Activated CD4-positive, alpha-beta T cell treated with anti-CD3 and anti-CD28 coated beads, Interleukin-2, amount 10 ng/mL, durations not matched to agents 24 days and 14 days (primary cell): ENCODE measurements at regions of chr1 and their contacts with region 1.

Region 1: GRCh38 chr1:221741711-221742554 is at the start of gene DUSP10:
- DNase-seq: peak; percentile 100
- H3K4me3 Mint-ChIP-seq: no peak within 1 kb of the TSS
- H3K27ac Mint-ChIP-seq: no peak within 1 kb of the TSS
- H3K4me1 Mint-ChIP-seq: peaks cover 34% of the 10 kb centered on the region
- H3K27me3 Mint-ChIP-seq: no peaks in the 10 kb centered on the region
- total RNA-seq, gene DUSP10: 13.5 and 14.6 TPM in 2 replicates

Region 2: DNA sequence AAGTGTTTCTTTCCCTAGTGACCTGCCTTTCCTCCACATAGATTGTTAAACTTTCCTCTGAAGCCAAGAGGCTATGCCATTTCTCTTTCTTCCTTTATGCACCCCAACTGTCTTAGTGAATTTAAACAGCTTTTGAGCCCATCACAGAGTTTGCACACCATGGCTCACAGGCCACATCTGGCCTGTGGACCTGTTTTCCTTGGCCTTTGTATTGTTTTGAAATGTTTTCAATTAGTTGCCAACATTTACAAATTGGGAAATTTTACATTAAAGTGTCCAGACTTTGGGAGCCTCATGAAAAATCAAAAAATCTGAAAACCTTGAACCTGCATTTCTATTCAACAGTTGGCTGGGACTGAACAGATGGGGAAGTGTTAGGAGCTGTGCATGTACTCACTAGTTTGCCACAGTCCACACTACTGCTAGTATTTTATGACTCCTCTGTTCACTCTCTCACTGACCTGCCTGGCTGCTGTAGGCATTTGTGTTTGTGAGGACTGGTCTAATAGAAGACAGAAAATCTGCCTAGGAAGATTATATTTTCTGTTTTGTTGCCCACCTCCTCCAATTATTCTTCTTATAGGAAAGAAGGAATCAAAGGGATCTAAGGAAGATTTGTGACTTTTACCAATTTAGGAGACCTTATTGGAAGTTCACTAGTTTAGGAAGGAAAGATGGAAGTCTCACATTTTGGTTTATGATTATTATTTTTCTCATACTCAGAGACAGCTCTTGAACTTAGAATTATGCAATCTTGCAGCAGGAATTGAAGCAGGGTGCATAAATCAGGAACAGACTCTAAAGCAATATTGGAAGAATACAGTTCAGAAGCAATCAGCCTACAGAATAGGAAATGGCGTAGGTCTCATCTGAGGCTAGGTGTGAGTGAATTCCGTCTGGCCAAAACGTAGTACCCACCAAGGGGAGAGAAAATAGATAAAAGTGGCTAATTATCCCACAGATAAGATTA is 728.0 kb before region 1 on chr1:
- intact Hi-C with region 1: no loop called
- DNase-seq: no peak
- H3K4me3 Mint-ChIP-seq: no peak overlapping the region
- H3K27ac Mint-ChIP-seq: no peak overlapping the region
- H3K4me1 Mint-ChIP-seq: no peaks in the 10 kb centered on the region
- H3K27me3 Mint-ChIP-seq: no peaks in the 10 kb centered on the region

Region 3: DNA sequence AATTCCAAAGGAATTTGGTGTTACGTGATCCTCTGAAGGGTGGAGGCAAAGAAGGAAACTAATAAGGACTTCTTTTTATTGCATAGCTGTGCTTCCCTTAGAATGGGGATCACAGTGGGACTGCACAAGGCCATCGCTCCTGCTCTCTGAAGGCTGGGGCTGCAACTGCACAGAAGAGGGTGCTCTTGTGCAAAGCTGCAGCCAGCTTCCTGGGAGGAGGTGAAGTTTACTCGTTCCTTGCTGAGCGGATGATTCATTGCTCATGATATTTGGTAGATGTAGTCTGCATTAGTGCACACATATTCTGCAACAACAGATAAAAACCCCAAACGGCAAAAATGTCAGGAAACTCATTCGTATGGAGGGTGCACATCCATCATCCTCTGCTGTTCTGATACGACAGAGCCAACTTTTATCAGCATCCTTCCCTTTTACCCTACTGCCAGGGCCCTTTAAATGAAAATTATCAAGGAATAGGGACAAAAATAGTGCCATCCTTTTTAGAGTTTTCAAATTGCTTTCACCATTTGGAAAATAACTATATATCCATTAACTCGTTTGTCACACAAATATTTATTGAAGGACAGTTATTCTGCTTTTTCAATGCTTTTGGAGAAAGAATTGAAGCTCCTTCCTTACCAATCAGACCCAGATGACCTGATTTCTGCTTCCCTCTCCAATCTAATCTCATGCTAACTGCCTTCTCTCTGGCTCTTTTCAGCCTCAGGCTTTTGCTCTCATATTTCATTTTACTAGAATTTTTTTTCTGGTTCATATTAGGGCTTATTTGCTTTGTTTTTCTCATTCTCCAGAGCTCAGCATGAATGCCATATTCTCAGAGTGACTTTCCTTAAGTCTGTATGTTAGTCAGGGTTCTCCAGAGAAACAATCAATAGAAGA is 263.6 kb before region 1 on chr1:
- intact Hi-C with region 1: loop called (anchors 5 kb)
- DNase-seq: peak; percentile 82
- H3K4me3 Mint-ChIP-seq: no peak overlapping the region
- H3K27ac Mint-ChIP-seq: no peak overlapping the region
- H3K4me1 Mint-ChIP-seq: no peaks in the 10 kb centered on the region
- H3K27me3 Mint-ChIP-seq: peaks cover 21% of the 10 kb centered on the region

Region 4: GRCh38 chr1:221667504-221667903 is 74.4 kb before region 1 on chr1:
- intact Hi-C with region 1: no loop called
- DNase-seq: no peak
- H3K4me3 Mint-ChIP-seq: no peak overlapping the region
- H3K27ac Mint-ChIP-seq: no peak overlapping the region
- H3K4me1 Mint-ChIP-seq: peaks cover 4% of the 10 kb centered on the region
- H3K27me3 Mint-ChIP-seq: peaks cover 22% of the 10 kb centered on the region

Region 5: DNA sequence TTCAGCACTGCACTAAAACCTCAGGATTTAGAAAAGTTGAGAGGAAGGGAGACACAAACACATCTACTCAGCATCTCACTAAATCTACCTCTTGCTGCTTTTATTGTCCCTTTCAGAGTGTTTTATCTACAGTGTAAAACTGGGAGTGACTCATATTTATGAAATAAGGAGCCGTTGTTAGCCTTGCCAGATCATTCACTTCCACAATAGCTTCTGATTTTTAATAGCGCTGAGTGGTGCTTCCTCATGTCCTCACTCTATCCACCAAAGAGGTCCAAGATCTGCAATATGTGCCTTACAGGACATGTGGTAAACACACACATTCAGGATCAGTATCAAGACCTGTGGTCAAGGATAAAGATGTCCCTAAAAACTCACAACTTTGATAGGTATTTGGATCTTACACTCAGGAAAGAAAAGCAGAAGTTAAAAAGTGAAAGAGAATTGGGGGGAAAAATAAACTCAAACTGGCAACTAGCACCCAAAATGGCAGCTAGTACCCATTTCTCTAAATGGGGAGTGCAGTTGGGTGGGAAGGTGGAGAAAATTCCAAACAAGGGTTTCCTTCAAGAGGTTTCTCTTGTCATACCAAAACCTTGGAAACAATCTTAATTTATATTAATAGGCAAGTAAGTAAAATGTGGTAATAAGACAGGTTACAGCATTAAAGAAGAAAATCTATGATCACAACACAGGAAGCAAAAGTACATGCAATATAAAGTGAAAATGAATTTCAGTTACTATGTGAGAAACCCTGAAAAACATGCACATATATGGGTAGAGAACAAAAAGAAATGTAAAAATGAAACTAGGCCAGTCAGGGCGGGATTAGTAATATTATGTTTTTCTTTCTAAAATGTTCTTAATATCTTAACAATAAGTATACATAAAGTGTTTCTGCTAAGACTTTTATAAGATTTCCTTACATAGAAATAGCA is 15.9 kb before region 1 on chr1:
- intact Hi-C with region 1: loop called (anchors 1 kb)
- DNase-seq: no peak
- H3K4me3 Mint-ChIP-seq: peak overlapping the region; percentile 65
- H3K27ac Mint-ChIP-seq: peak overlapping the region; percentile 93
- H3K4me1 Mint-ChIP-seq: peaks cover 71% of the 10 kb centered on the region
- H3K27me3 Mint-ChIP-seq: no peaks in the 10 kb centered on the region

Region 6: DNA sequence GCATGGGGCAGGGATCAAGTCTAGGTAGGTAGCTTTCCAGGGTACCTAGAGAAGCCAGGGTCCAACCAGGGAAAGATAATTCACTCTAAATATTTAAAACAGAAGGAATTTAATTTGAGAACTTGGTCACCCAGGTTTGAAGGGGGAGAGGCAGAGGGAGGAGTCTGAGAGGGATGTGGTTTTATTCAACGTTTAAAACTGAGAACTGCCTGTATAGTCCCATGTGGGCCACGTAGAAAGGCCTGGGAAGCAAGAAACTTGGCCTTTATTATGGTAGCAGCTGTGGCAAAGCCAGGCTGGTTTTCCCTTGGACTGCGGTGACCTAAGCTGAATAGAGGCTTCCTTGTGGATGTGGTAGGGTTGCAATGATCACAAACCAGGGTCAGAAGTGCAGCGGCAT is 42.0 kb after region 1 on chr1:
- intact Hi-C with region 1: no loop called
- DNase-seq: peak; percentile 74
- H3K4me3 Mint-ChIP-seq: peak overlapping the region; percentile 54
- H3K27ac Mint-ChIP-seq: peak overlapping the region; percentile 52
- H3K4me1 Mint-ChIP-seq: peaks cover 61% of the 10 kb centered on the region
- H3K27me3 Mint-ChIP-seq: no peaks in the 10 kb centered on the region

Region 7: GRCh38 chr1:221794079-221794670 is 52.2 kb after region 1 on chr1:
- intact Hi-C with region 1: loop called (anchors 1 kb)
- DNase-seq: peak; percentile 77
- H3K4me3 Mint-ChIP-seq: peak overlapping the region; percentile 45
- H3K27ac Mint-ChIP-seq: peak overlapping the region; percentile 90
- H3K4me1 Mint-ChIP-seq: peaks cover 36% of the 10 kb centered on the region
- H3K27me3 Mint-ChIP-seq: no peaks in the 10 kb centered on the region

Region 8: GRCh38 chr1:221878134-221878533 is 136.2 kb after region 1 on chr1:
- intact Hi-C with region 1: loop called (anchors 5 kb)
- DNase-seq: no peak
- H3K4me3 Mint-ChIP-seq: no peak overlapping the region
- H3K27ac Mint-ChIP-seq: no peak overlapping the region
- H3K4me1 Mint-ChIP-seq: peaks cover 10% of the 10 kb centered on the region
- H3K27me3 Mint-ChIP-seq: peaks cover 2% of the 10 kb centered on the region

Region 9: DNA sequence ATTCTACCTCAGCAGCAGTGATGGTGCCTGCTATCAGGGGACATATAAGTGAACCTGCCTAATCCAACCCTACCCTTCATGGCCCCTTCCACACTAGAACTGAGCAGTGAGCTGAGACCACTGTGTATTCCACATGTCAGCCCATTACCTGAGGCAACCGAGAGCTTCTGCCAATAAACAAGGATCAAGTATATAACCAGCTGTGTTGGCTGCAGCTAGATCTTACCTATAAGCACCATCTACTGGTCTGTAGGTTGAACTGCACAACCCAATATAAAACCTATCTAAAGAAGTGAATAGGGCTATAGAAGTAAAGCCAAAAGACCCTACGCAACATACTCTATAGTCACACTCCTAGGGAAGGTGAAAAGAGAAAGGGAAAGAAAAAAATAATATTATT is 429.1 kb after region 1 on chr1:
- intact Hi-C with region 1: loop called (anchors 10 kb)
- DNase-seq: peak; percentile 57
- H3K4me3 Mint-ChIP-seq: no peak overlapping the region
- H3K27ac Mint-ChIP-seq: no peak overlapping the region
- H3K4me1 Mint-ChIP-seq: no peaks in the 10 kb centered on the region
- H3K27me3 Mint-ChIP-seq: no peaks in the 10 kb centered on the region

Region 10: GRCh38 chr1:222814536-222815439 is 1072.9 kb after region 1 on chr1 and contains the start of gene DISP1:
- intact Hi-C with region 1: no loop called
- DNase-seq: peak; percentile 91
- H3K4me3 Mint-ChIP-seq: peak within 1 kb of the TSS; percentile 95
- H3K27ac Mint-ChIP-seq: peak within 1 kb of the TSS; percentile 95
- H3K4me1 Mint-ChIP-seq: peaks cover 17% of the 10 kb centered on the region
- H3K27me3 Mint-ChIP-seq: peaks cover 9% of the 10 kb centered on the region
- total RNA-seq, gene DISP1: 1.3 and 2.0 TPM in 2 replicates